GM12878 (cell line): ENCODE measurements at regions of chr1 and their contacts with region 1.

Region 1: GRCh38 chr1:234772345-234773147 is 162.6 kb upstream of the IRF2BP2 start:
- DNase-seq: peak; percentile 97
- ATAC-seq: peak; percentile 92
- H3K4me3 ChIP-seq: peak overlapping the region; percentile 13; the same call in 1 of the 2 replicates
- H3K27ac ChIP-seq: peak overlapping the region; percentile 89
- H3K4me1 ChIP-seq: peaks cover 37% of the 10 kb centered on the region
- H3K27me3 ChIP-seq: peaks cover 6 to 11% of the 10 kb centered on the region in 2 experiments; a peak in 3 of 4 replicates
- CTCF ChIP-seq: no peak
- EP300 ChIP-seq: peak; percentile 88 to 93; a peak in 3 of 4 replicates
- POLR2A ChIP-seq: peak; percentile 77
- RAD21 ChIP-seq: 0 out of 2 replicates have a peak, but pooled peaks have one; percentile 13

Region 2: DNA sequence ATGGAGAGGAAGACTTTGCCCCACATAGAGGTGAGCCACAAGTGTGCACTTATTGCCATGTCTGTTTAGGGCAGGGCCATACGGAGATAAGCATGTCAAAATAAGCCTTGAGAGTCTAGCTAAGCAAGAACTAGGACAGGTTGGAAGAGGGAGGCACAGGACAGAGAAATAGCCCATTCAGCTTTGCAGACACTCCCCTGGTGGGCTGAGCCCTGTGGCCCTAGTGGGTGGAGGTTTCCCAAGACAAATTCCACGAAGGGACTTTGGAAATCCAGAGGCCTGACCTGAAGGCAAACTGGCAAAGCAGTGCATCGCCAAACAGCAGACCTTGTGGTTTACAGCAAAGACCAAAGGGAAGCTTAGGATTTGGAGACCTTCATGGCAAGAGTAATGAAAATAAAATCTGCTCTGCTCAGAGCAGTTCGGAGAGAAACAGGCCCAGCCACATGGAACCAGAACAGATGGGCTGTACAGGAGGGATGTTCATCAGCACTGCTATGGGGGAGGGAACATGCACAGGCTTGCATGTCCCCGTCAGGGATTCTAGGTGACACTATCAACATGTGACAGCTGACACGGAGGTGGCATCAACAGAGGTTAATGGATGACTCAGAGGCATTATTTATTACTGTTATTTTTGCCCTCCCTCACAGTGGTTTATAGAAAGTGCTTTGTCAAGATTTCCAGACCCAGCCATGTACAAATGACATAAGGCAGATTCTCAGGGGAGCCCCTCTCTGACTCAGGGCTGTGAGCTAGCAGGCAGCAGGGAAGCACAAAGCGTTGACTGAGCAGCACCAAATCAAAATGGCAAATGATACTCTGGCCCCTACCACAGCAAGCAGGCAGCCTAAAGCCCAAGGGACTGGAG is 72.5 kb before region 1 on chr1:
- CTCF ChIA-PET with region 1: interaction called, 4 read pairs
- POLR2A ChIA-PET with region 1: interaction called, 7 read pairs
- RAD21 ChIA-PET with region 1: interaction called, 14 read pairs
- SMC1A ChIA-PET with region 1: interaction called, 9 read pairs
- in situ Hi-C with region 1: no loop called
- intact Hi-C with region 1: no loop called
- DNase-seq: peak; percentile 83
- ATAC-seq: peak; percentile 89
- H3K4me3 ChIP-seq: no peak overlapping the region
- H3K27ac ChIP-seq: peak overlapping the region; percentile 43
- H3K4me1 ChIP-seq: peaks cover 32% of the 10 kb centered on the region
- H3K27me3 ChIP-seq: no peaks in the 10 kb centered on the region
- CTCF ChIP-seq: no peak
- EP300 ChIP-seq: peak; percentile 95 to 96
- POLR2A ChIP-seq: 0 out of 2 replicates have a peak, but pooled peaks have one; percentile 23
- RAD21 ChIP-seq: 0 out of 2 replicates have a peak, but pooled peaks have one; percentile 28

Region 3: GRCh38 chr1:234730770-234731568 is 41.6 kb before region 1 on chr1:
- CTCF ChIA-PET with region 1: interaction called, 6 read pairs
- POLR2A ChIA-PET with region 1: interaction called, 7 read pairs
- RAD21 ChIA-PET with region 1: interaction called, 58 read pairs
- SMC1A ChIA-PET with region 1: interaction called, 43 read pairs
- in situ Hi-C with region 1: no loop called
- intact Hi-C with region 1: loop called (anchors 1 kb)
- DNase-seq: peak; percentile 68
- ATAC-seq: peak; percentile 80
- H3K4me3 ChIP-seq: peak overlapping the region; percentile 17; the same call in 1 of the 2 replicates
- H3K27ac ChIP-seq: peak overlapping the region; percentile 82
- H3K4me1 ChIP-seq: peaks cover 59% of the 10 kb centered on the region
- H3K27me3 ChIP-seq: no peaks in the 10 kb centered on the region
- CTCF ChIP-seq: peak; percentile 17 to 30 (median 28); a peak in 3 of 6 replicates
- EP300 ChIP-seq: peak; percentile 53 to 57; a peak in 3 of 4 replicates
- POLR2A ChIP-seq: no peak
- RAD21 ChIP-seq: peak; percentile 46; the same call in 1 of the 2 replicates

Region 4: GRCh38 chr1:234925440-234926263 is 153.1 kb after region 1 on chr1:
- CTCF ChIA-PET with region 1: no interaction called
- POLR2A ChIA-PET with region 1: interaction called, 3 read pairs
- RAD21 ChIA-PET with region 1: interaction called, 3 read pairs
- SMC1A ChIA-PET with region 1: interaction called, 6 read pairs
- in situ Hi-C with region 1: no loop called
- intact Hi-C with region 1: loop called (anchors 1 kb)
- DNase-seq: peak; percentile 40
- ATAC-seq: peak; percentile 1
- H3K4me3 ChIP-seq: peak overlapping the region; percentile 40; the same call in 1 of the 2 replicates
- H3K27ac ChIP-seq: peak overlapping the region; percentile 95
- H3K4me1 ChIP-seq: peaks cover 48% of the 10 kb centered on the region
- H3K27me3 ChIP-seq: no peaks in the 10 kb centered on the region
- CTCF ChIP-seq: no peak
- EP300 ChIP-seq: no peak; a peak in 1 of 4 replicates
- POLR2A ChIP-seq: no peak
- RAD21 ChIP-seq: no peak

Region 5: DNA sequence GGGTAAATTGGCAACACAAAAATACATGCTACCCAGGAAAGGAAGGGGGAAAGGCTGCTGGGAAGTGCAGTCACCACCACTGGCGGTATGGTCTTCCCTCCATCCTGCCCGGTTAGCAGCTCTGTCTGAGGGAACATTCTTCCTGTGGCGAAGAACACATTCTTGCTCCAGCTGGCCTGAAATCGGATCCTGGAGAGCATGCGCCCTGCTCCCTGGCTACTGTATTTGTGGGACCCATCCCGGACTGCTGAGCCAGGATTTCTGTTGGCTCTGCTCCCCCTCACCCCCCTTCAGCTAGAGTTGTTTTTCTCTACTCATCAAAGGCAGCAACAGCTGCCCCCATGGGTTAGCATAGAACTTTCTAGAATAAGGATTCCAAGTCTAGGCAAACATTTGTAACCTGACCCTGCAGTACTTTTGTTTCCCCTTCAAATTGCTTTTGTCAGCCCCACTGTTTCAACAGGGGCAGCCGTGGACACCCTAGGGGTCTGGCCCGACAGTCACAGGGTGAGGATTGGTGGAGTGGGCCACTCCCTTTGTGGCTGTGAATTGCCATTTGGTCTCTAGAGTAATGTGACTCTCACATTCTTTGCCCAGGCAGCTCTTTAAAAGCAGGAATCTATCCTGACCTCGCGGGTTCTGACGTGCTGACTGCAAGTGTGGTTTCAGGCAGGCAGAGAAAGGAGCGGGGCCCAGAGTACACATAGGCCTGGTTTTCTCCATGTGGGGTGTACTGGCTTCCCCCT is 198.4 kb after region 1 on chr1:
- CTCF ChIA-PET with region 1: interaction called, 3 read pairs
- POLR2A ChIA-PET with region 1: interaction called, 4 read pairs
- RAD21 ChIA-PET with region 1: interaction called, 28 read pairs
- SMC1A ChIA-PET with region 1: interaction called, 4 read pairs
- in situ Hi-C with region 1: no loop called
- intact Hi-C with region 1: no loop called
- DNase-seq: no peak
- ATAC-seq: peak; percentile 72
- H3K4me3 ChIP-seq: no peak overlapping the region
- H3K27ac ChIP-seq: peak overlapping the region; percentile 95
- H3K4me1 ChIP-seq: peaks cover 60% of the 10 kb centered on the region
- H3K27me3 ChIP-seq: no peaks in the 10 kb centered on the region
- CTCF ChIP-seq: no peak
- EP300 ChIP-seq: peak in 1 of 2 experiments; percentile 87; a peak in 2 of 4 replicates
- POLR2A ChIP-seq: peak; percentile 31; the same call in 1 of the 2 replicates
- RAD21 ChIP-seq: 0 out of 2 replicates have a peak, but pooled peaks have one; percentile 4